Activated CD4-positive, alpha-beta memory T cell treated with anti-CD3 and anti-CD28 coated beads, Interleukin-2, amount 10 ng/mL, durations not matched to agents 7 days and 5 days (primary cell): ENCODE measurements at regions of chr6 and their contacts with region 1.

Region 1: GRCh38 chr6:137811121-137811915 is 55.7 kb upstream of the TNFAIP3 start:
- DNase-seq: peak; percentile 81
- H3K4me3 Mint-ChIP-seq: peak overlapping the region; percentile 16
- H3K27ac Mint-ChIP-seq: peak overlapping the region; percentile 74
- H3K4me1 Mint-ChIP-seq: peaks cover 38% of the 10 kb centered on the region
- H3K27me3 Mint-ChIP-seq: no peaks in the 10 kb centered on the region

Region 2: DNA sequence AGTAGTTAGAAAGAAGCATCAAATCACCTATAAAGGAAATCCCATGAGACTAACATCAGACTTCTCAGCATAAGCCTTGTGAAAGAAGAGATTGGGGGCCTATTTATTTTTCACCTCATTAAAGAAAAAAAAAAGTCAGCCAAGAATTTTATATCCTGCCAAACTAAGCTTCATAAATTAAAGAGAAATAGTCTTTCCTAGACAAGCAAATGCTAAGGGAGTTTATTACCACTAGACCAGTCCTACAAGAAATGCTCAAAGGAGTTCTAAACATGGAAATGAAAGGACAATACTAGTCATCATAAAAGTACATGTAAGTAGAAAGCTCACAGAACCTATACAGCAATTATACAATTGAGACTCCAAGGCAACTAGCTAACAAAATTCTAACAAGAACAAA is 220.6 kb before region 1 on chr6:
- CTCF ChIA-PET with region 1: no interaction called
- POLR2A ChIA-PET with region 1: no interaction called
- DNase-seq: no peak
- H3K4me3 Mint-ChIP-seq: no peak overlapping the region
- H3K27ac Mint-ChIP-seq: no peak overlapping the region
- H3K4me1 Mint-ChIP-seq: peaks cover 19% of the 10 kb centered on the region
- H3K27me3 Mint-ChIP-seq: peaks cover 25% of the 10 kb centered on the region

Region 3: GRCh38 chr6:137717074-137718073 is 93.9 kb before region 1 on chr6:
- CTCF ChIA-PET with region 1: interaction called, 3 read pairs
- POLR2A ChIA-PET with region 1: interaction called, 13 read pairs
- DNase-seq: peak; percentile 86
- H3K4me3 Mint-ChIP-seq: no peak overlapping the region
- H3K27ac Mint-ChIP-seq: peak overlapping the region; percentile 71
- H3K4me1 Mint-ChIP-seq: peaks cover 50% of the 10 kb centered on the region
- H3K27me3 Mint-ChIP-seq: no peaks in the 10 kb centered on the region

Region 4: DNA sequence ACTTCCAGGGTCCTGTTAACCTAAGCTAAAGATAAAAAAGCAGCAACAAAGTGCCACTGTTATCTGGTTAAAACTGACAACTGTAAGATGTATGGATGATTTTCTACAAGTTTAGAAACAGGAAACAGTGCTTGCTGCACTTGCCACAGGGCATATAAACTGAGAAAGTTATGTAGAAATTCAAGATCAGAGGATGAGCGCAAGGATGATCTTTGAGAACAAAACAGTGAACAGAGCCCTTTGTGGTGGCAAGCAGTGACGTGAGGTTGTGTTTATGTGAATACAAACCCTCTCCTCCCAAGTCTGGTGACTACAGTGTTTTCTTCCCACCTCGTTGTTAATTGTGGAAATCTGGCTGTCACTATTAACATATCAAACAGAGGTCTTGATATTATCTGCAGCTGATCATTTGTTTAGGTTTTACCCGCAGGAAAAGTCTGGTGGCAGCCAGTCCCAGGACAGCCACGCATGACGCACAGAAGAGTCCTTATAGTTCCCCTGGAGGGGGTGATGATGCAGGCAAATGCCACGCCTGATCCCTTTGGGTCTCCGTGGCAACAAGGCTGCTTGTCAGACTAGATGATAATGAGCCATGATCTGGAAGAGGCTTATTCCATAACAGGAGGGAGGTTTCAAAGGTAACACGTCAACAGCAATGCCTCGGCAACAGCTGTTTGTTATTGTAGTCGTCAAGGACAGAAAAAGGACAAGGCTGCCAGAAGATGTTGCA is 12.7 kb after region 1 on chr6:
- CTCF ChIA-PET with region 1: interaction called, 4 read pairs
- POLR2A ChIA-PET with region 1: interaction called, 17 read pairs
- DNase-seq: peak; percentile 69
- H3K4me3 Mint-ChIP-seq: peak overlapping the region; percentile 65
- H3K27ac Mint-ChIP-seq: peak overlapping the region; percentile 92
- H3K4me1 Mint-ChIP-seq: peaks cover 77% of the 10 kb centered on the region
- H3K27me3 Mint-ChIP-seq: no peaks in the 10 kb centered on the region